Brain microvascular endothelial cell (primary cell): ENCODE measurements at regions of chr9 and their contacts with region 1.

Region 1: DNA sequence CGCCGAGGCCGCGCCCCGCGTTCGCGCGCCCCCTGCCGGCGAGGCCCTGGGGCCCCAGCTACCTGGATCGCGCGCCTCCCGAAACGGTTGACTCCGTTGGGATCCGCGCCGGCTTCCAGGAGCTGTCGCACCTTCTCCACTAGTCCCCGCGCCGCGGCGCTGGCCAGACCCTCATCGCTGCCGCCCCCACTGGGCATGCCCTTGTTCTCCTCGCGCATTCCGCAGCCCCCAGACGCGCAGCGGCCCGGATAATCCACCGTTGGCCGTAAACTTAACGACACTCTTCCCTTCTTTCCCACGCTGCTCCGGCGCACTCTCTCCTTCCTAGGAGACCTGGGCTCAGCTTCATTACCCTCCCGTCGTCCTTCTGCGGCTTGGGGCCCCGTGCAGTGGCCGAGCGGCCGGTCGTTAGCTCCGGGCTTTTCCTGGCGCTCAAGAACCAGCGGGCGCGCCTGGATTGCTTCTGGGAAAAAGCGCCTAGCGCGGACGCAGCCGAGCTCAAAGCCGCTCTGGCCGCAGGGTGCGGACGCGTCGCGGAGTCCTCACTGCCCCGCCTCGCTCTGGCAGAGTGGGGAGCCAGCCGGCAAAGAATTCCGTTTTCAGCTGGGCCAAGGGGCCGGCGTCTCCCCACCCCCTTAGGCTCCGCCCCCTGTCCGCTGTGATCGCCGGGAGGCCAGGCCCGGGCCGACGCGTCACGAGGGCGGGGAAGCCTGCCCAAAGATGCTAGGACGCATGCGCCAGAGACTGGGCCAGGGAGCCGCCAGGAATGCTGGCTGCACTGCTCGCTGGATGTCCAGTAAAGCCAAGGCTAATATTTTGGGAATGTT is at the start of gene CDKN2B:
- DNase-seq: peak; percentile 92
- H3K4me3 ChIP-seq: peak within 1 kb of the TSS; percentile 94
- H3K27ac ChIP-seq: peak within 1 kb of the TSS; percentile 89
- H3K27me3 ChIP-seq: no peaks in the 10 kb centered on the region
- CTCF ChIP-seq: peak; percentile 62

Region 2: GRCh38 chr9:21294325-21294724 is 714.6 kb before region 1 on chr9:
- in situ Hi-C with region 1: no loop called
- DNase-seq: peak; percentile 29
- H3K4me3 ChIP-seq: no peak overlapping the region
- H3K27ac ChIP-seq: no peak overlapping the region
- H3K27me3 ChIP-seq: no peaks in the 10 kb centered on the region
- CTCF ChIP-seq: no peak

Region 3: GRCh38 chr9:21802195-21803000 is 206.6 kb before region 1 on chr9 and contains the start of gene MTAP:
- in situ Hi-C with region 1: loop called (anchors 25 kb)
- DNase-seq: peak; percentile 92
- H3K4me3 ChIP-seq: peak within 1 kb of the TSS; percentile 79
- H3K27ac ChIP-seq: peak within 1 kb of the TSS; percentile 66
- H3K27me3 ChIP-seq: no peaks in the 10 kb centered on the region
- CTCF ChIP-seq: no peak